Activated CD4-positive, alpha-beta memory T cell treated with anti-CD3 and anti-CD28 coated beads, Interleukin-2, amount 10 ng/mL, durations not matched to agents 7 days and 5 days (primary cell): ENCODE measurements at regions of chr6 and their contacts with region 1.

Region 1: DNA sequence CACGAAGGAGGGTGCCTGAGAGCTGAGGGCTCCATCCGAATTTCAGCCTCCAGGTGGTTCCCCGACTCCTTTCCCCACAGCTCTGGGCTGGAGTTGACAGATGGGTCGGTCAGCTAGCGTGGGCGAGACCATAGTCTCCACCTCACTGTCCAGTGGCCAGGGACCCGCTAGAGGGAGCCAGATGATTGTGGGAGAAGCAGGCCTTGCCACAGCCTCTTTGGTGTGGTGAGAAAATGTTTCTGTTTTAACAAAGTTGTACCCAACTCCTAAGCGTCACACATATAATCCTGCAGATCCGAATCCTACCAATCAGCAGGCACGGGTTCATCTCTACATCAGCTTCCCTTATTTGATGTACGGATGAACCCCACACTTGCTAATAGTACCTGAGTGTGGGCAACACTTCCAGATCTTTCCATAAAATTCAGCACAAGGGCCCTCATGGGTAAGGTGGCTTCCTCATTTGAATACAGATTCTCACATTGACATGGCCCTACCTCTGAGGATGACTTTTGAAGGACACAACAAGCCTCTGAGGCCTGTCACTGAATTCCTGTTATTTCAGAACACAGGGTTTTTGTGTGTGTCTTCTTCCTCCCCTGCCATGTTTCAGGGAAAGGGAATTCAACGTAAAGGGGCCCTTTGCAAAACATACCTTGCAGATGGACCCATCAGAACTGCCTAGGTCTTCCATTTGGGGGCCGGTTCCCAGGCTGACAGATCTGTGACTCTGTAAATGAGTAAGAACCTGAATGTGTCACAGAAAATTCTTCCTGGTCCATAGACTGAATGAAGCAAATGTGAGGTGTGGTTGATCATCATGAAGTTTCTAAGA is 103.2 kb upstream of the DUSP22 start:
- DNase-seq: peak; percentile 91
- H3K4me3 Mint-ChIP-seq: peak overlapping the region; percentile 13
- H3K27ac Mint-ChIP-seq: peak overlapping the region; percentile 74
- H3K4me1 Mint-ChIP-seq: peaks cover 50% of the 10 kb centered on the region
- H3K27me3 Mint-ChIP-seq: no peaks in the 10 kb centered on the region

Region 2: DNA sequence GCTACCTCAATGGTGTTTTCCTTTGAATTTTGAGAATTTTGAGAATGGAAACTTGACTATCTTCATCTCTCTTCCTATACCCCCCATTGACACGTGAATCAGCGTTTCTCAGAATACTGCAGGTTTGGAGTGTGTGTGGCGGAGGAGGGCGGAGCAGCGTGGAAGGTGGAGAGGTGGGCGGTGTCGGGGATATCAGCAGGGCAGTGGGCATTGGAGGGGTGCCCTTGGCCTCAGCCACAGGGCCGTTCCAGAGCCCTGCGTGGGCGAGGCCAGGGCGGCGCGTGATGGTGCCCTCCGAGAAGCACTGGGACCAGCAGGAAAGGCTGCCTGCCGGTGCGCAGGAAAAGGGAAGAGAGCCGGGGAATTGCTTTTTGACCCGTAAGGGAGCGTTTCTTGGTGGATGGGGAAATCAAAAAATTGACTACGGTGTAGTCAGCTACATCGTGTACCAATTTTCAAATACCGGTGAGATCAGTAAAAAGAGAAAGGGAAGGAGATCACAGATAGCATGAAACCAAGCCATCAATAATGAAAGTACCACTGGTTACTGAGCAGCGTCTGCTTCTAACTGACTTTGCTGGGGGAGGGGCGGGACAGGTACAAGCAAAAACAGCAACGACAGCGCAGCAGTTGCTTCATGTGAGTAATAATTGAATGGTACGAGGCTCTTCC is 20.5 kb after region 1 on chr6:
- CTCF ChIA-PET with region 1: interaction called, 3 read pairs
- POLR2A ChIA-PET with region 1: interaction called, 17 read pairs
- DNase-seq: peak; percentile 80
- H3K4me3 Mint-ChIP-seq: peak overlapping the region; percentile 84
- H3K27ac Mint-ChIP-seq: peak overlapping the region; percentile 93
- H3K4me1 Mint-ChIP-seq: peaks cover 41% of the 10 kb centered on the region
- H3K27me3 Mint-ChIP-seq: peaks cover 24% of the 10 kb centered on the region

Region 3: DNA sequence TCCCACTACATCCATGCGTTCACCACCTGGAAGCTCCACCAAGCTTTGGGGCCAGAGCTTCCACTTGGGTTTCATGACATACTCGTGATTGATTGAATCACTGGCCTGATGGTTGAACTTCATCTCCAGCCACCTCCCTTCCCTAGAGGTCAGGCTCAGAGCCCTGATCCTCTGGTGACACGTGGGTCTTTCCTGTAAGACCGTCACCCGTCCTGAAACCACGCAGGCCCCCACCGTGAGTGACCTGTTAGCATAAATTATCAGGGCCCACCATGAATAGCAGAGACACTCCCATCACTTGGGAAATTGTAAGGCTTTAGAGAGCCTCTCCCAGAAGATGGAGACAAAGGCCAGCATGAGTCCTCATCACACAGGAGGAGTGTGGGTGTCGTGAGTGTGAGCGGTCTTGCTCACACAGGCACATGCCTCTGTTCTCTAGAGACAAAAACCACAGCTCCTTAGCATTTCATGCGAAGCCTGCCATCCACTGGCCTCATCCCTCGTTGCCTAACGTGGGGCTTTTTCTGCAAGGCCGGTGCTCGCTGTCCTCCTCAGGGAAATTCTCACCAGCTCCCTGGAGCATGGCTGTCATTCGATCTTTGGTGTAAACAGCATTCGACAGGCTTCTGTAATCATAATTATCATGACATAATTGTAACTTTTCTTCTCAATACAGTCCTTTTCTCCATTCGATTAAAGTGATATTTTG is 38.2 kb after region 1 on chr6:
- CTCF ChIA-PET with region 1: interaction called, 33 read pairs
- POLR2A ChIA-PET with region 1: interaction called, 59 read pairs
- DNase-seq: no peak
- H3K4me3 Mint-ChIP-seq: no peak overlapping the region
- H3K27ac Mint-ChIP-seq: peak overlapping the region; percentile 91
- H3K4me1 Mint-ChIP-seq: peaks cover 77% of the 10 kb centered on the region
- H3K27me3 Mint-ChIP-seq: peaks cover 7% of the 10 kb centered on the region

Region 4: DNA sequence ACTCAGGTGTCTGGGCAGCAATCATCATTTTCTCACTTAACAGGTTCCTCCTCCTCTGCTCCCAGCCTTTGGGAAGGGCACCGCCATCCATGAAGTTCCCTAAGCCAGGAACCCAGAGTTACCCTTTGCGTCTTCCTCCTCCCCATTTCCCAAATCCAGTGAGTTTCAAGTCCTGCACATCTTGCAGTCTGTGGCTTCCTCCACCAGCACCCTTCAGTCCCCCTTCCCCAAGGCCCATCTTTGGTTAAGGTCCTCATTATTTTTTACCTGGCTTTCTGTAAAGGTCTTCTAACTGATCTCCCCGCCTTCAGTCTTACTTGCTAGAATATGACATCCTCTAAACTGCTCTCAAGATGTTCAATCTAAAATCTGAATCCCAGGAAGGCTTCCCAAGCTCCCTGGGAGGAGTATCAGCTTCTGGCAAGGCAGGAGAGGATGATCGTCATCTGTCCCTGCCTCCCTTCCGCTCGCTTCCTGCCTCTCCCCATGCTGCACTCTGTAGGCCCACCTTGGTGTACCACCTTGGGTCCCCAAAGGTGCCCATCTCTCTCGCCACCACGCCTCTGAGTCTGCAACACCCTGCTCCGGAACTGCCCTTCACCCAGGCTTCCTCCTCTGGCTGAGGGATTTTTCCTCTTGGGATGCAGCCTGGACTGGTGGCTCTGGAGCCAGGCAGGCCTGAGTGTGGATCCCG is 91.9 kb after region 1 on chr6:
- CTCF ChIA-PET with region 1: no interaction called
- POLR2A ChIA-PET with region 1: no interaction called
- DNase-seq: no peak
- H3K4me3 Mint-ChIP-seq: no peak overlapping the region
- H3K27ac Mint-ChIP-seq: no peak overlapping the region
- H3K4me1 Mint-ChIP-seq: peaks cover 9% of the 10 kb centered on the region
- H3K27me3 Mint-ChIP-seq: peaks cover 9% of the 10 kb centered on the region

Region 5: GRCh38 chr6:336159-337019 is 147.4 kb after region 1 on chr6:
- CTCF ChIA-PET with region 1: interaction called, 13 read pairs
- POLR2A ChIA-PET with region 1: interaction called, 5 read pairs
- DNase-seq: peak; percentile 29
- H3K4me3 Mint-ChIP-seq: no peak overlapping the region
- H3K27ac Mint-ChIP-seq: peak overlapping the region; percentile 71
- H3K4me1 Mint-ChIP-seq: peaks cover 55% of the 10 kb centered on the region
- H3K27me3 Mint-ChIP-seq: no peaks in the 10 kb centered on the region

Region 6: DNA sequence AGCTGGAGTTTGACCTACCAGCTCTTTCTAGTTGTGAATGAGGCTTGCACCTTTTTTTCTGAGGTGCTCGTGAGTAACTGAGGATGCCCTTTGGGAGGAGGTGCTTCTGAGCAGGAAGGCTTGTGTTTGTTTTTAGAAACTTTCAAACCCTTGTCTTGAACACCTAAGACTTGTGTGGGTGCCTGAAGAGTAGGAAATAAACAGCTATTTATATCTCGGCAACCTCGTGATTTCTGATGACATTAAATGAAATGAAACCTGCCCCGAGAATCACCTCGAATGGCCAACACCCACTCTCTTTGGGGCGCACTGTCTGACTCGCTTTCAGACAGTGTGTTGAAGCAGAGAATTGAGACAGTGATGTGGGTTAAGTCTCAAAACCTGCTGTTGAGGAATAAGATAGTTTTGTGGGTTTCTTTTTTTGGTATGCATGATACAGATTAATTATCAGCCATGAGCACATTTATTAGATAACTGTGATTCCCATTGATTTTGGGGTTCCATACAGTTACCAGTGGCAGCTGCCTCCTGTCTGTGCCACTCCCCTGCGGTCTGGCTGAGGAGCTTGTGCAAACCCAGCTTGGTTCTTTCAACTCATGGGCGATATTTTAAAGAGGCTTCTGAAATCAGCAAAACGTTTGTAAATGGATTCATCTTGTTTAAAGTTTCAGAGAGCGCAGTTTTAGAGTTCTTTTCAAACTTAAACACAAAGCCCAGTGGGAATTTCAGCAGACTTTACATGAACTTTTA is 210.9 kb after region 1 on chr6:
- CTCF ChIA-PET with region 1: interaction called, 13 read pairs
- POLR2A ChIA-PET with region 1: interaction called, 159 read pairs
- DNase-seq: peak; percentile 67
- H3K4me3 Mint-ChIP-seq: peak overlapping the region; percentile 53
- H3K27ac Mint-ChIP-seq: peak overlapping the region; percentile 82
- H3K4me1 Mint-ChIP-seq: peaks cover 95% of the 10 kb centered on the region
- H3K27me3 Mint-ChIP-seq: no peaks in the 10 kb centered on the region